ENCODE measurements at regions of chr19 and their contacts with region 1.

Region 1: DNA sequence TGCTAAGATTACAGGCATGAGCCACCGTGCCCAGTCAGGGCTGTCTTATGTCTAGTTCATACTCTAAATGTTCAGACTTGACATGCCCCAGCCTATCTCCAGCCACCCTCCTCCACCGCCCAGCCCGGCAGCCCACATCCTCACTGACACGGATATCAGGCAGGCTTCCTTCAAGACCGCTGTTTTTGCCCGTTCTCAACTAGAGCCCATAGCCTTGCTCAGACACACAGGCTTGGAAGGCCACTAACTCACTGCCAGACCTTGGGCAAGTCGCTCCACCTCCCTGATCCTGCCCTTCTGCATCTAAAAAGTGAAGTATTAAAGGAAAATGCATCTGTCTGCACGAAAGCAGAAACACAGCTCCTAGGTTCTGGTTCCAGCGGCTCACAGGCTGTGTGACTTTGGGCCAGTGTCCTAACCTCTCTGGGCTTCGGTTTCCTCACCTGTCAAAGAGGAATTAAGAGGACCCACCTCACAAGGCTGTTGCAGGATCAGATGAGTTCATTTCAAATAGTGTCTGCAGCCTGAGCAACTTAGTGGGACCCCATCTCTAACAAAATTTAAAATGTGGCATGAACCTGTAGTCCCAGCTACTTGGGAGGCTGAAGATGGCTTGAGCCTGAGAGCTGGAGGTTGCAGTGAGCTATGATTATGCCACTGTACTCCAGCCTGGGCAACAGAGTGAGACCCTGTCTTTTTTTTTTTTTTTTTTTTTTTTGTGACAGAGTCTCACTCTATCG is 14.5 kb upstream of the CERS4 start:
- DNase-seq: peak in 5 of 9 donors; percentile 20 to 40 (median 34)
- ATAC-seq: peak; percentile 60
- H3K4me3 ChIP-seq: peak overlapping the region; percentile 19
- H3K4me3 Mint-ChIP-seq: peak overlapping the region; percentile 63 to 93 (median 82)
- H3K27ac ChIP-seq: peak overlapping the region; percentile 62
- H3K27ac Mint-ChIP-seq: peak overlapping the region; percentile 87 to 98 (median 93)
- H3K4me1 ChIP-seq: peaks cover 15 to 20% of the 10 kb centered on the region in 2 donors
- H3K4me1 Mint-ChIP-seq: peaks cover 42 to 53% (median 49%) of the 10 kb centered on the region in 7 donors
- H3K27me3 ChIP-seq: no peaks in the 10 kb centered on the region
- H3K27me3 Mint-ChIP-seq: no peaks in the 10 kb centered on the region

Region 2: DNA sequence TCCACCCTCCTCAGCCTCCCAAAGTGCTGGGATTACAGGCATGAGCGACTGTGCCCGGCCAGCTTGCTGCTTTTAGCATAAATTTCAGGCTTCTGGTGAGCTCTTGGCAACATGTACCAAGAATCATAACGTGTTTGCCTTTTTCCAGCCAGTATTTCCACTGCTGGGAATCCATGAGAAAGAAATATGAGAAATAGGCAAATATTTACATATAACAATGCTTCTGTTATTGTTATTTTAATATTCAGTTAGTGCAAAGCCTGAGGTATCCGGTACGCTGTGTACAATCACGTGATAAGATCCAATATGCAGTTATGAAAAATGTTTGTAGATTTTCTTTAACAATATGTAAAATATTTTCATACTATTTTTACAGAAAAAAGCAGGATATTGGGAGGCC is 14.6 kb before region 1 on chr19:
- CTCF ChIA-PET with region 1: interaction called, 8 read pairs
- POLR2A ChIA-PET with region 1: interaction called, 19 read pairs
- intact Hi-C with region 1: loop called (anchors 2 kb)
- DNase-seq: no peak
- ATAC-seq: no peak
- H3K4me3 ChIP-seq: no peak overlapping the region
- H3K4me3 Mint-ChIP-seq: no peak overlapping the region
- H3K27ac ChIP-seq: no peak overlapping the region
- H3K27ac Mint-ChIP-seq: no peak overlapping the region
- H3K4me1 ChIP-seq: peaks cover 6 to 14% of the 10 kb centered on the region in 2 donors
- H3K4me1 Mint-ChIP-seq: peaks cover 0 to 15% (median 10%) of the 10 kb centered on the region in 7 donors
- H3K27me3 ChIP-seq: no peaks in the 10 kb centered on the region
- H3K27me3 Mint-ChIP-seq: no peaks in the 10 kb centered on the region